Activated CD8-positive, alpha-beta T cell treated with anti-CD3 and anti-CD28 coated beads for 36 hours (primary cell): ENCODE measurements at regions of chr13 and their contacts with region 1.

Region 1: DNA sequence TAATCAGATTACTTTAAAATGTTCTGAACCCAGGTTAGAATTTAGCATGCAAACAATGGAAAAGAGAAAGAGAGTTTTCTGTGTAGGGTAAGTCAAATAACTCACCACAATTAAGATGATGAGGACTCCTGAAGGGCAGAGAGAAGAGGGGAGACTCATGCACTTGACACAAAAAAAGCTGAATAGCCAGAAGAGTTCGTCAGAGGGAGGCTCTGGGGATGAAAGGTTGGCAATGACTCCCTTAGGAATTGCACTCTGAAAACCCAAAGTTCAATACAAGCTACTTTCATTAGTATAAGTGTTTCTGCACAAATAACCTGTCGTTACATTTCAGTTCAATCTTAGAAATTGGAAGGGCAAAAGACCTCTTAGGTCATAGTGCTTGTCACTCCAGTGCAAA is 434.4 kb upstream of the PCDH9 start:
- DNase-seq: no peak
- ATAC-seq: no peak
- H3K4me3 Mint-ChIP-seq: no peak overlapping the region
- H3K27ac Mint-ChIP-seq: no peak overlapping the region
- H3K4me1 Mint-ChIP-seq: no peaks in the 10 kb centered on the region
- H3K27me3 Mint-ChIP-seq: no peaks in the 10 kb centered on the region
- CTCF ChIP-seq: no peak

Region 2: GRCh38 chr13:67696775-67697174 is 32.3 kb after region 1 on chr13:
- CTCF ChIA-PET with region 1: no interaction called
- POLR2A ChIA-PET with region 1: no interaction called
- intact Hi-C with region 1: loop called (anchors 2 kb)
- DNase-seq: no peak
- ATAC-seq: no peak
- H3K4me3 Mint-ChIP-seq: no peak overlapping the region
- H3K27ac Mint-ChIP-seq: no peak overlapping the region
- H3K4me1 Mint-ChIP-seq: no peaks in the 10 kb centered on the region
- H3K27me3 Mint-ChIP-seq: no peaks in the 10 kb centered on the region
- CTCF ChIP-seq: no peak